ENCODE measurements at regions of chr14 and their contacts with region 1.

Region 1: DNA sequence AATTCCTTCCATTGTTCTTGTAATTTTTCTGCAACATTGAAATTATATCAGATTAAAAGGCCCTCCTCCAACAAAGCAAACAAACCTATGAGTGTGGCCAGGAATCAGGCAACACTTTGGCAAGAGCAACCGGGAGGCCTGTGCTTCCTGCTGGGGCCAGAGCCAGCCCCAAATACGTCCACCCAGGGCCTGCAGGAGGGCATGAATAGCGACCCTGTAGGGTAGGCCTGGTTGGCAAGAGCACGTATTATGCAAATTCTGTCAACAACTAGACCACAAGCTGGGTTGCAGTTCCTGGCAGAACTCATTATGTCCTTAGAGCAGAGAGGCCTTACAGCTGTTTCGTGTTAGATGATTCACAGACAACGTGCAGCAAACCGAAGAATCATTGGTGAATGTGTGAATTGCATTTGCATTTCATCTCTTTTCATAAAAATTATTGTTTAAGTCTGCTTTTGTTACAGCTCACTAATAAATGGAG is 26.9 kb upstream of the LGALS3 start:
- DNase-seq: peak; percentile 54
- ATAC-seq: peak; percentile 39
- H3K4me3 ChIP-seq: peak overlapping the region; percentile 56 to 71 (median 64)
- H3K27ac ChIP-seq: peak overlapping the region; percentile 89
- H3K4me1 ChIP-seq: peaks cover 48% of the 10 kb centered on the region
- H3K27me3 ChIP-seq: no peaks in the 10 kb centered on the region
- CTCF ChIP-seq: no peak
- EP300 ChIP-seq: no peak
- POLR2A ChIP-seq: peak; percentile 50 to 51; a peak in 2 of 4 replicates
- RAD21 ChIP-seq: no peak

Region 2: GRCh38 chr14:55038708-55039107 is 63.5 kb before region 1 on chr14:
- CTCF ChIA-PET with region 1: no interaction called
- POLR2A ChIA-PET with region 1: no interaction called
- in situ Hi-C with region 1: no loop called
- intact Hi-C with region 1: no loop called
- DNase-seq: no peak
- ATAC-seq: no peak
- H3K4me3 ChIP-seq: no peak overlapping the region
- H3K27ac ChIP-seq: no peak overlapping the region
- H3K4me1 ChIP-seq: no peaks in the 10 kb centered on the region
- H3K27me3 ChIP-seq: no peaks in the 10 kb centered on the region
- CTCF ChIP-seq: no peak
- EP300 ChIP-seq: no peak
- POLR2A ChIP-seq: no peak
- RAD21 ChIP-seq: no peak

Region 3: GRCh38 chr14:55051426-55052268 is 50.5 kb before region 1 on chr14 and contains the start of gene MAPK1IP1L:
- CTCF ChIA-PET with region 1: no interaction called
- POLR2A ChIA-PET with region 1: interaction called, 15 read pairs
- in situ Hi-C with region 1: no loop called
- intact Hi-C with region 1: no loop called
- DNase-seq: peak; percentile 82
- ATAC-seq: peak; percentile 96
- H3K4me3 ChIP-seq: peak within 1 kb of the TSS; percentile 76 to 99 (median 94)
- H3K27ac ChIP-seq: peak within 1 kb of the TSS; percentile 99
- H3K4me1 ChIP-seq: peaks cover 46% of the 10 kb centered on the region
- H3K27me3 ChIP-seq: no peaks in the 10 kb centered on the region; a peak in 1 of 5 replicates
- CTCF ChIP-seq: peak; percentile 94
- EP300 ChIP-seq: peak; percentile 16 to 81; a peak in 3 of 4 replicates
- POLR2A ChIP-seq: peak; percentile 96 to 98
- RAD21 ChIP-seq: peak; percentile 88
- total RNA-seq, gene MAPK1IP1L: 27.8 and 34.7 TPM in 2 replicates

Region 4: GRCh38 chr14:55077155-55077554 is 25.0 kb before region 1 on chr14:
- CTCF ChIA-PET with region 1: no interaction called
- POLR2A ChIA-PET with region 1: interaction called, 12 read pairs
- in situ Hi-C with region 1: no loop called
- intact Hi-C with region 1: no loop called
- DNase-seq: peak; percentile 19
- ATAC-seq: peak; percentile 64
- H3K4me3 ChIP-seq: peak overlapping the region; percentile 40 to 65 (median 62)
- H3K27ac ChIP-seq: no peak overlapping the region
- H3K4me1 ChIP-seq: peaks cover 27% of the 10 kb centered on the region
- H3K27me3 ChIP-seq: no peaks in the 10 kb centered on the region
- CTCF ChIP-seq: no peak
- EP300 ChIP-seq: no peak
- POLR2A ChIP-seq: no peak
- RAD21 ChIP-seq: no peak

Region 5: GRCh38 chr14:55117803-55118441 is 15.7 kb after region 1 on chr14:
- CTCF ChIA-PET with region 1: no interaction called
- POLR2A ChIA-PET with region 1: interaction called, 19 read pairs
- in situ Hi-C with region 1: no loop called
- intact Hi-C with region 1: no loop called
- DNase-seq: no peak
- ATAC-seq: no peak; the same call in 2 of the 3 replicates
- H3K4me3 ChIP-seq: no peak overlapping the region
- H3K27ac ChIP-seq: no peak overlapping the region
- H3K4me1 ChIP-seq: peaks cover 80% of the 10 kb centered on the region
- H3K27me3 ChIP-seq: no peaks in the 10 kb centered on the region
- CTCF ChIP-seq: no peak
- EP300 ChIP-seq: no peak
- POLR2A ChIP-seq: no peak
- RAD21 ChIP-seq: no peak

Region 6: GRCh38 chr14:55123101-55123500 is 20.9 kb after region 1 on chr14:
- CTCF ChIA-PET with region 1: no interaction called
- POLR2A ChIA-PET with region 1: interaction called, 14 read pairs
- in situ Hi-C with region 1: no loop called
- intact Hi-C with region 1: loop called (anchors 2 kb)
- DNase-seq: no peak
- ATAC-seq: peak; percentile 22
- H3K4me3 ChIP-seq: peak overlapping the region in 1 of 3 experiments; percentile 34; a peak in 1 of 6 replicates
- H3K27ac ChIP-seq: peak overlapping the region; percentile 61
- H3K4me1 ChIP-seq: peaks cover 48% of the 10 kb centered on the region
- H3K27me3 ChIP-seq: peaks cover 2 to 10% of the 10 kb centered on the region in 2 experiments; a peak in 3 of 5 replicates
- CTCF ChIP-seq: no peak
- EP300 ChIP-seq: no peak
- POLR2A ChIP-seq: no peak
- RAD21 ChIP-seq: no peak

Region 7: DNA sequence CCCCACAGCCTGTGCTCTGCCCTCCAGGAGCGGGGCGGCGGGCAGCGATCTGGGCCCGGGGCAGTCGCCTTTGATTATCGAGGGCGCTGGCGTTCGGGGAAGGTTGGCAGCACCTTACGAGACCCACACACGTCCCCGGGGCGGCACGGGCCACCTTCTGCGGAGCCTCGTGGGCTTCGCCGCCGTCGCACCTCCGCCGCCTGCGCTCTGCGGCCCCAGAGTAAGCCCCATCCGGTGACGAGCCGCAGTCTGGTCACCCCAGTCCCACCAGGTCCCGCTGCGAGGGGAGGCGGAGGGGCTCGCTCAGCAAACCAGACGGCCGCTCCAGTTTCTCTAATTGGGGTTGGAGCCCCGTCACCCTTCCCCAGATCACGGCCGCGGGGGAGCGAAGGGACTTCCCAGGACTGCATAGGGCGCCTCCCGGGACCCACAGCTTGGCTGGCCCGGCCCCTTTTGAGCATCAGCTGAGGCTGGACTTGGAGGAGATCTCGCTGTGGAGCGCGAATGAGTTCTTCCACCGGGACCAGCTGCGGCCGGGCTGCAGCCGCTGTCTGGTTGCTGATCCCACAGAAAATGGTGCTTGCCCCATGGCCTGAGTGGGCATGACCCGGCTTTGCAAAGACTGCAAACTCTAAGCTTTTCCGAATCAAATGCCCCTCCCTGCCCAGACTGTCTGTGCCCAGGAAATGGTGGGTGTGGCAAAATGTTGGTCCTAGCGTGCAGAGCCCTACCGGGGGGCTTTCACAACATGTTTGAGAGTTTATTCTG is 27.4 kb after region 1 on chr14:
- CTCF ChIA-PET with region 1: no interaction called
- POLR2A ChIA-PET with region 1: interaction called, 19 read pairs
- in situ Hi-C with region 1: no loop called
- intact Hi-C with region 1: loop called (anchors 2 kb)
- DNase-seq: peak; percentile 29
- ATAC-seq: peak; percentile 81
- H3K4me3 ChIP-seq: peak overlapping the region; percentile 69 to 78 (median 76)
- H3K27ac ChIP-seq: no peak overlapping the region
- H3K4me1 ChIP-seq: peaks cover 32% of the 10 kb centered on the region
- H3K27me3 ChIP-seq: peaks cover 2 to 14% of the 10 kb centered on the region in 2 experiments; a peak in 3 of 5 replicates
- CTCF ChIP-seq: no peak
- EP300 ChIP-seq: no peak
- POLR2A ChIP-seq: peak in 1 of 2 experiments; percentile 27; a peak in 1 of 4 replicates
- RAD21 ChIP-seq: no peak